Endothelial cell of umbilical vein (primary cell): ENCODE measurements at regions of chr5 and their contacts with region 1.

Region 1: GRCh38 chr5:116370886-116371285 is 203.7 kb downstream of the SEMA6A start:
- DNase-seq: peak; percentile 82
- H3K4me3 ChIP-seq: no peak overlapping the region
- H3K27ac ChIP-seq: peak overlapping the region; percentile 65
- H3K4me1 ChIP-seq: peaks cover 28% of the 10 kb centered on the region
- H3K27me3 ChIP-seq: no peaks in the 10 kb centered on the region
- CTCF ChIP-seq: no peak
- POLR2A ChIP-seq: no peak

Region 2: GRCh38 chr5:116358911-116359418 is 11.9 kb before region 1 on chr5:
- CTCF ChIA-PET with region 1: interaction called, 18 read pairs
- POLR2A ChIA-PET with region 1: no interaction called
- dilution Hi-C with region 1: no loop called
- intact Hi-C with region 1: no loop called
- DNase-seq: no peak
- H3K4me3 ChIP-seq: no peak overlapping the region
- H3K27ac ChIP-seq: no peak overlapping the region
- H3K4me1 ChIP-seq: no peaks in the 10 kb centered on the region
- H3K27me3 ChIP-seq: no peaks in the 10 kb centered on the region
- CTCF ChIP-seq: no peak
- POLR2A ChIP-seq: no peak

Region 3: DNA sequence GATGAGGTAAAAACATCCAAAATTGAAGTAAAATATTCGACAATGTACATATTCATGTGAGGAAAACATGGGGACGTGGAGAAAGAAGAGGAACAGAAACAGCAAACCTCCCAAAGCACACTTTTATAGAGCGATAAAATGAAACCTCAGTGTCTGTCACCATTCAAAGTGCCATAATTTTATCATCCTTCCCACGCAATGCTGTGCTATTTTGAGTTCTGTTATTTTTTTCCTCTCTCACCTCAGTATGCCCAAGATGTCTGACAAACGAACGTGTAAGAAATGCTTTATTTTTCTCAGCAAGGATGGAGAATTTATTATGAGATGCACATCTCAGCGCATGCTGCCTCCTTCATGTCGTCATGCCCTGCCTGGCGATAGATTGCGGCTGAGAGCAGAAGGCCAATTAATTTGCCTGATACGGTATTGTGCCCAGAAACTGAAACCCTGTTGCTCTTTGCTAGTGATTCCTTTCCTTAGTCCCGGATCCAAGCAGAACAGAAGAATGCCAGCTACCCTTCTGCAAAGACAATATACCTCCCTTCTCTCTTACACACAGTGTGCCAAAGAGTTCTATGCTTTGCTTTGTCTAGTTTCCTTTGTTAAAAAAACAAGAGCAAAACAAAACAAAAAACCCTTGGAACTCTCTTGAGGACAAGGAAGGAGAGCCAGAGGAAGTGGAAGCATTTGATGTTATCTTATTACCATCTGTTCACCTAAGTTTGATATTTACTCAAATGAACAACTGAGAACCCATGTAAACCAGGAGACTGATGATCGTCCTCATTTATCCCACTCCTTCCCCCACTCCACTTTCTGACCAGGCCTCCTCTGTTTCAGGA is 11.4 kb after region 1 on chr5:
- CTCF ChIA-PET with region 1: interaction called, 16 read pairs
- POLR2A ChIA-PET with region 1: no interaction called
- dilution Hi-C with region 1: no loop called
- intact Hi-C with region 1: loop called (anchors 1 kb)
- DNase-seq: peak; percentile 64
- H3K4me3 ChIP-seq: no peak overlapping the region
- H3K27ac ChIP-seq: no peak overlapping the region
- H3K4me1 ChIP-seq: peaks cover 23% of the 10 kb centered on the region
- H3K27me3 ChIP-seq: no peaks in the 10 kb centered on the region
- CTCF ChIP-seq: no peak
- POLR2A ChIP-seq: no peak

Region 4: DNA sequence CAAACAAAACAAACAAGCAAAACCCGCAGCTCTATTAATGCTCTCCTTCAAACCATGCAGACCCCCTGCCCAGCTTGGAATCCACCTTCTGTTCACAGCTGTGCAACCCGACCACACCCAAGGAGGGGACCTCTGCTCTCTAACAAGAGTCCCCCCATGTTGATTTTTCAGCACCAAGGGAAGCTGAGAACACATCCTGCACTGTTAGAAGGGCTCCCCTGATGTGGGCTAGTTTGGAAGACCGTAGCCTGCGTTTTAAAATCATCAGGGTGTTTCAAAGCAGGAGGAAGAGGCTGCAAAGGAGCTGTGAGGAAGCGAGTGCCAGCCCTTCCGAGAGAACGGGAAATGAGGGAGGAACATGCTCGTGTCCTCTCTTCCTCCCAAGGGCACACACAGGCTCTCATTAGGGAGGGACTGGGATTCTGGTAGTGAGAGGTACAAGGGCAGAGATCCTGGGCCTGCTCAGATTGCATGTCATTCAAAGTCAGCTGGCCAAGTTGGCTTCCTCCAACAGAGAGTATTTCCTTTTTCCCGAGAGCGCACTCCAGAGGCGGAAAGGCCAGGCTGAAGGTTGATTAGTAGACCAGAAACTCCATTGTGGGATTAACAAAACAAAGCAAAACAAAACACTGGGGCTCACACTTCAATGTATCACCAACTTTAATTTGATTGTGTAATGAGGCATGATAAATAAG is 17.8 kb after region 1 on chr5:
- CTCF ChIA-PET with region 1: interaction called, 16 read pairs
- POLR2A ChIA-PET with region 1: no interaction called
- dilution Hi-C with region 1: no loop called
- intact Hi-C with region 1: no loop called
- DNase-seq: peak; percentile 81
- H3K4me3 ChIP-seq: no peak overlapping the region
- H3K27ac ChIP-seq: no peak overlapping the region
- H3K4me1 ChIP-seq: peaks cover 17% of the 10 kb centered on the region
- H3K27me3 ChIP-seq: no peaks in the 10 kb centered on the region
- CTCF ChIP-seq: peak in 1 of 2 donors; percentile 9
- POLR2A ChIP-seq: no peak

Region 5: DNA sequence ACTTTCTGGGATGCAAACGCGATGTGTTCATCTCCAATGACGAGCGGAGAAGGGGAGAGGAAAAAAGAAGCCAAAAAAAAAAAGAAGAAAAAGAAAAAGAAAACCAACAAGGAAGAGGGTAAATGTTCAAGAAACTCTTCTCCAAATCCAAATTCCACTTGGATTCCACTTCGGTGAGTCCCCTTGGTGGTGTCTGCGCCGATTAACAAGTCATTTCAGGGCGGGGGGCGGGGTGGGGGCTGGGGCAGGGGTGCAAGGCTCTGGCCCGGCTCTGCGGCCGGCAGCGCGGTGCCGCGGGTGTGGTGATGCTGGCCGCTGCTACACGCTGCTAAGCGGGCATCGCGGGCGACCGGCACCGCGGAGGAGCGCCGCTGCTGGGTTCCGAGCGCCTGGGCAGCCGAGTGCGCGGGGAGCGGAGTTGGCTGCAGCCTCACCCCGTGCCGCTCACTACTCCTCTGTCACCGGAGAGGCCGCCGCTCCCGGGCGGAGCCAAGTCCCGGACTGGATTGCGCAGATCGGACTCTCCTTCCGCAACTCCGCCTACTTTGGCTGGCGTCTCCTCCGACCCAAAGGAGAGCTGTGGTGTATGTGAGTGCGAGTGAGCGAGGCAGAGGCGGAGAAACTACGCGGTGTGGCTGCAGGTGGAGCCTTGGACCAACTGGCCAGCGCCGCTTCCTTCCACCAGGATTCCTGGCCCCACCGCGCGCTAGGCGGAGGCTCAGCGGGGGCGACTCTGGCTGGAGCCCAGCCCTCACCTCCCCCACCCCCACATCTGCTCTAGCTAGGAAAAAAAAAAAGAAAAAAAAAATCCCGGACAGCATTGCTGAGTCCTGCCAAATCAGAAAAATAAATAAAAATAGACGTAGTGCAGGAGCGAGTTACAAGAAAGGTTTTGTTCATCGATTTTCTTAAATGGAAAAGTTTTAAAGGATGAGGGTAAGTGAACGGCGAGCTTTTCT is 203.8 kb after region 1 on chr5 and contains the start of gene SEMA6A:
- CTCF ChIA-PET with region 1: interaction called, 6 read pairs
- POLR2A ChIA-PET with region 1: interaction called, 3 read pairs
- dilution Hi-C with region 1: no loop called
- intact Hi-C with region 1: loop called (anchors 1 kb)
- DNase-seq: peak; percentile 91
- H3K4me3 ChIP-seq: peak within 1 kb of the TSS; percentile 53 to 61 (median 58)
- H3K27ac ChIP-seq: no peak within 1 kb of the TSS
- H3K4me1 ChIP-seq: peaks cover 17% of the 10 kb centered on the region
- H3K27me3 ChIP-seq: peaks cover 44 to 70% of the 10 kb centered on the region in 2 experiments
- CTCF ChIP-seq: no peak
- POLR2A ChIP-seq: no peak
- total RNA-seq, gene SEMA6A: 1.4 and 1.5 TPM in 2 replicates

Region 6: GRCh38 chr5:116885825-116886224 is 514.9 kb after region 1 on chr5:
- CTCF ChIA-PET with region 1: no interaction called
- POLR2A ChIA-PET with region 1: no interaction called
- dilution Hi-C with region 1: no loop called
- intact Hi-C with region 1: no loop called
- DNase-seq: no peak
- H3K4me3 ChIP-seq: no peak overlapping the region
- H3K27ac ChIP-seq: no peak overlapping the region
- H3K4me1 ChIP-seq: no peaks in the 10 kb centered on the region
- H3K27me3 ChIP-seq: no peaks in the 10 kb centered on the region
- CTCF ChIP-seq: no peak
- POLR2A ChIP-seq: no peak